ENCODE measurements at regions of chr12 and their contacts with region 1.

Region 1: DNA sequence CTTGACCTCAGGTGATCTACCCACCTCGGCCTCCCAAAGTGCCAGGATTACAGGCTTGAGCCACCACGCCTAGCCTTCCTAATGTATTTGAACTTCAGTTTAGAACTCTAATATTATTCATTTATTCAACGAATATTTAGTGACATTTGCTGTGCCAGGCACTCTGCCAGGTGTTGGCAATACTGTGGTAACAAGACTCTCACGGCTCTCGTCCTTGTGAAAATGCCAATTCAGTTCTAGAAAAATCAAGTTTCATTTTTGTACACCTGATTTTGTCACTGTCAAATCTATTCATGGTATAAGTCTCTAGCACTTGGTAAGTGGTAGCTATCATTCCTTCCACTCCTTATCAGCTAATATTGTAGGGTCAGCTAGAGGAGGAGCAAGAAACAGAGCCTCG is 6.3 kb upstream of the PWP1 start:
- DNase-seq: no peak
- ATAC-seq: no peak

Region 2: GRCh38 chr12:107783406-107784376 is 104.4 kb after region 1 on chr12:
- intact Hi-C with region 1: no loop called
- DNase-seq: no peak
- ATAC-seq: no peak

Region 3: GRCh38 chr12:107884769-107885694 is 205.7 kb after region 1 on chr12:
- intact Hi-C with region 1: loop called (anchors 5 kb)
- DNase-seq: peak; percentile 37
- ATAC-seq: peak in 1 of 2 donors; percentile 56